Mammary epithelial cell (primary cell): ENCODE measurements at regions of chr14 and their contacts with region 1.

Region 1: GRCh38 chr14:67934008-67934481 is 114.5 kb downstream of the RAD51B start:
- DNase-seq: peak; percentile 68
- H3K4me3 ChIP-seq: no peak overlapping the region
- H3K27ac ChIP-seq: no peak overlapping the region
- H3K4me1 ChIP-seq: no peaks in the 10 kb centered on the region
- H3K27me3 ChIP-seq: no peaks in the 10 kb centered on the region
- CTCF ChIP-seq: peak; percentile 61 to 74

Region 2: DNA sequence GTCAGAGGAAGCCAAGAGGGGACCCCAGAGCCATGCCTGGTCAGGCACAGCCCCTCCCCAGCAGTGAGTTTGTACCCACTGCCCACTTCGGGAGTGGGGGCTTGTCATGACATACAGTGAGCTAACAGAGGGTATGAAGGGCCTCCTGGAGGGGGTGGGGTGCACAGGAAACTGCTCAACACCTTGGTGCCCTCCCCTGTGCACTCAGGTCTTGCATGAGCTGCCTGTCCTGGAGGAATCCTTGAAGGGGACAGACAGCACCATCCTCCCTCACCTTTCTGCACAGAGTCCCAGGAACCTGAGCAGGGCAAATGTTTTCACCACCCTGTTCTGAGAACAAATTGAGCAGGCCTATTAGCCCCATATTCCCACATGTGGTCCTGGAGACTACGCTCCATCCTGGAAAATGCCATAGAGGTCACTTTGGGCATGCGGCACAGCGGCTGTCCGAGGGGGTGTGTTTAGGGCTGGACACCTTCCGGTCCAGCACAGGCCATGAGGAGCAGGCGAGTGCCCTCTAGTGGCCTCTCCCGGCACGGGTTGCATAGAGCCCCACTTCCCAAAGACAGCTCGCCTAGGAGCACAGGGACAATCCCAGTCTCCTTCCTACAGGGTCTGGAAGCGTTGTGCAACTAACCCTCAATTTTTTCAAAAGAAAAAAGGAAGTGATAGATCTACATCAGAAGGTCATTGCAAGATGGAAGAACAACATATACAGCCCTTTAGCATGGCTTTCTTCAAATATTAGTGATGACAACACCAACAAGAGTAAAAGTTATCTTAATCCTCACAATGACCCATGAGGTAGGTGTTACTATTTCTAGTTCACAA is 890.7 kb after region 1 on chr14:
- CTCF ChIA-PET with region 1: no interaction called
- dilution Hi-C with region 1: loop called (anchors 25 kb)
- in situ Hi-C with region 1: loop called (anchors 5 to 10 kb)
- intact Hi-C with region 1: no loop called
- DNase-seq: no peak
- H3K4me3 ChIP-seq: no peak overlapping the region
- H3K27ac ChIP-seq: no peak overlapping the region
- H3K4me1 ChIP-seq: peaks cover 9% of the 10 kb centered on the region
- H3K27me3 ChIP-seq: no peaks in the 10 kb centered on the region
- CTCF ChIP-seq: peak; percentile 85 to 97

Region 3: DNA sequence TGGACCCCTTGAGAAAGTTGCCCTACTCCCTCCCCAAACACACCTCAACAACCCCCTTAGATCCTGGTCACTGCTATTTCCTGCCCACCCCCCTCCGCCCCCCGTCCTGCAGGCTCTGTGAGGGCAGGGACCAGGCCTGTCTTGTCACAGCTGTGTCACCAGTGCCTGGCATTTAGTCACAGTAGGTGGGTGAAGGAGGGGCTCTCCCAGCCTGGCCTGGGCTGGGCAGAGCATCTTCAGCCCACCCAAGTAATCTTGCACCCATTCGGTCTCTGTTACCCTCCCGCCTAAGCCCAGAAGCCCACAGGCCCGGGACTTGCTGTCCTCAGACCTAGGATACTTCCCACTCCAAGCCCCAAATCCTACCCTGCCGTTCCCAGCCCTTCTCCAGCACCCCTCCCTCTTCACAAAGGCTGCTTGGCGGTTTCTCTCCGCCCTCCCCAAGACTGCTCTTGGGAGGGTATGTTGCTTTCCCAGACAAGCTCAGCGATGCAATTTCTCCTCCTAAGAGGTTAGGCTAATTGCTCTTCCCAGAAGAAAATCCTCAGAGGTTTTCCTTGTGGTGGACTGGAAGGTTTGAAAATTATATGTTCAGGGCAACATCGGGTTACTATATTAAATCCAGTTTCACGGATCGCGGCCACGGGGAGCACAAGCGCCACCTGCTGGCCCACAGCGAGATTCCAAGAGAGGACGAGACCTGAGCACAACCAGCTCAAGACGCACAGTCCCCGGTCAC is 909.6 kb after region 1 on chr14:
- CTCF ChIA-PET with region 1: no interaction called
- dilution Hi-C with region 1: no loop called
- in situ Hi-C with region 1: no loop called
- intact Hi-C with region 1: loop called (anchors 1 kb)
- DNase-seq: peak; percentile 46
- H3K4me3 ChIP-seq: no peak overlapping the region
- H3K27ac ChIP-seq: no peak overlapping the region
- H3K4me1 ChIP-seq: peaks cover 17% of the 10 kb centered on the region
- H3K27me3 ChIP-seq: no peaks in the 10 kb centered on the region
- CTCF ChIP-seq: peak; percentile 84 to 93